ENCODE measurements at regions of chr7 and their contacts with region 1.

Region 1: GRCh38 chr7:40057292-40057691 is 77.1 kb downstream of the MPLKIP start:
- DNase-seq: peak in 2 of 4 donors; percentile 15 to 29
- ATAC-seq: no peak
- H3K4me3 ChIP-seq: no peak overlapping the region
- H3K27ac ChIP-seq: no peak overlapping the region
- H3K4me1 ChIP-seq: peaks cover 6% of the 10 kb centered on the region
- H3K27me3 ChIP-seq: no peaks in the 10 kb centered on the region
- CTCF ChIP-seq: no peak
- POLR2A ChIP-seq: no peak

Region 2: GRCh38 chr7:39894904-39895303 is 162.4 kb before region 1 on chr7:
- intact Hi-C with region 1: loop called (anchors 5 kb)
- DNase-seq: no peak
- ATAC-seq: no peak
- H3K4me3 ChIP-seq: no peak overlapping the region
- H3K27ac ChIP-seq: no peak overlapping the region
- H3K4me1 ChIP-seq: no peaks in the 10 kb centered on the region
- H3K27me3 ChIP-seq: no peaks in the 10 kb centered on the region
- CTCF ChIP-seq: no peak
- POLR2A ChIP-seq: no peak

Region 3: DNA sequence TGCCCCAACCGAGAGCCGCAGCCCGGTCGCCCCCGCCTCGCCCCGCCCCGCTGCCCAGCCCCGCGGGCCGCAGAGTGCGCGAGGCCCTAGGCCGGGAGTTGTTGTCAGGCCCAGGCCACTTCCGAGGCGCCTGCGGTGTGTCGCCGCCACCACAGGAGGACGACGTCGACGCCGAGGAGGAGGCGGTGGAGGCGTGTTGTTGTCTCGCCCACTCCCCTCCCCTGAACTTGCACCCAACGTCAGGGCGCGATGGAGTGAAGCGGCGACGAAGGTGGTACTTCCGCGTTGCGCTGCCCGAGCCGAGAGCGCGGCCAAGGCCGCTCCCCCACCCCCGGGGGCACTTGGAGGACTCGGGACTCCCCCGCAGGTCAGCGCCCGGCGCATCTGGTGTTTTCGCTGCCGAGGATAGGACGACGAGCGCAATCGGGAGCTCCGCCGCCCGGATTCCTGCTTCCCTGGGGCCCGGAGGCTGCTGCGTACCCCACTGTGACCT is 107.3 kb before region 1 on chr7 and contains the start of gene CDK13:
- intact Hi-C with region 1: loop called (anchors 10 kb)
- DNase-seq: peak; percentile 74 to 85 (median 76)
- ATAC-seq: peak; percentile 45
- H3K4me3 ChIP-seq: peak within 1 kb of the TSS; percentile 75 to 90
- H3K27ac ChIP-seq: peak within 1 kb of the TSS; percentile 99 to 100 (median 99)
- H3K4me1 ChIP-seq: peaks cover 25% of the 10 kb centered on the region
- H3K27me3 ChIP-seq: no peaks in the 10 kb centered on the region
- CTCF ChIP-seq: peak in 3 of 7 experiments; percentile 15 to 18 (median 16)
- POLR2A ChIP-seq: peak in 2 of 3 donors; percentile 61 to 71
- total RNA-seq, gene CDK13: 73.2 to 97.6 TPM